Caco-2 (cell line): ENCODE measurements at regions of chr13 and their contacts with region 1.

Region 1: DNA sequence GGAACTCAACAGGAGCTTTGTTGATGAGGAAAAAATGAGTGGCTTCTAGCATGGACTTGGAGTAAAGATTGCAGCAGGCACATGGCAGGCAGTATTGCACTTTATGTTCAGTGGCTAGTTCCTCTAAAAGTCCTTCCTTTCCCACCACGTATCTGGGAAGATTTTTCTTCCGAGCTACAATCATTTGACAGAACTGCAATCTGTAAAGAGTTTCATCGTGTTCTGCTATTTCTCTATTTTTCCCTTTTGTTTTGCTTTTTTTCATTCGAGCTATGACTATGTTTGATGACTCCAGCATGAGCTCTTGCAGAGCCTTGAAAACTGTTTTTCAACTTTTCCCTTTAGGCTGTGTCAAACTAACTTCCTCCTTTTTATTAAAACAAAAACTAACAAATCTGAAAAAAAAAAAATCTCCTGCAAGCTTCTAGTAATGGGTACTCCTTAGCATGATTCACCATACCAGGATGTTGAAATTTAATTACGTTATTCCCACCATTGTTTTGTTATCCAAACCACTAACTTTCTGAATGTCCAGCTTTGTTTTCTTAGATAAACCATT is 12.3 kb downstream of the CLDN10 start:
- DNase-seq: no peak
- H3K4me3 ChIP-seq: no peak overlapping the region
- H3K4me3 Mint-ChIP-seq: no peak overlapping the region
- H3K27ac Mint-ChIP-seq: no peak overlapping the region
- H3K4me1 ChIP-seq: no peaks in the 10 kb centered on the region
- H3K4me1 Mint-ChIP-seq: no peaks in the 10 kb centered on the region
- H3K27me3 ChIP-seq: no peaks in the 10 kb centered on the region
- H3K27me3 Mint-ChIP-seq: peaks cover 10% of the 10 kb centered on the region
- CTCF ChIP-seq: no peak

Region 2: DNA sequence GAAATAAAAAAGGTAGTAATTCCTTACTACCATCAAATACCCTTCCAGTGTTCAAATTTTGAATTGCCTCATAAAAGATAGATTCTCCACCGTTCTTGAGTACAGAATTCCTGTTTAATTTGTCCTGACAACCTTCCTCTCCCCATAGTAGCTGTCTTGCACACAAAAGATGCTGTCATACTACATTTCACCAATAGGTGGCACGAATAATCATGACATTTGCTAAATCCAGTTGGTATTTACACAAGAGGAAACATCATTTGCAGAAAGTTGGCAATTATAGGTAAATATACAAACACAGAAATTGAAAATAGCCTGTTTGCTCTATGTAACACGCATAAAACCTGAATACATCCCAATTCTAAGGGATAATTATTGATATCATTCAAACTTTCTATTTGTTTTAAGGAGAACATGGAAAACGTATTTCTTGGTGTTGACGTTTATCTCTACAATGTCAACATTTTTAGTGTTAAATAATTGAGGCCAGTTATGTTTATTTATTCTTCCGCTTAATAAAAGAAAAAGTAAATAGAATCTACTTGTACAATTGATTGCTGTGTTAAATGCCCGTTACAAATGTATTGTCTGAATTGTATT is 70.6 kb before region 1 on chr13:
- CTCF ChIA-PET with region 1: interaction called, 3 read pairs
- POLR2A ChIA-PET with region 1: no interaction called
- intact Hi-C with region 1: loop called (anchors 2 kb)
- DNase-seq: peak in 1 of 2 experiments; percentile 66
- H3K4me3 ChIP-seq: no peak overlapping the region
- H3K4me3 Mint-ChIP-seq: no peak overlapping the region
- H3K27ac Mint-ChIP-seq: no peak overlapping the region
- H3K4me1 ChIP-seq: peaks cover 9% of the 10 kb centered on the region
- H3K4me1 Mint-ChIP-seq: peaks cover 8% of the 10 kb centered on the region
- H3K27me3 ChIP-seq: no peaks in the 10 kb centered on the region
- H3K27me3 Mint-ChIP-seq: no peaks in the 10 kb centered on the region
- CTCF ChIP-seq: peak; percentile 48 to 73

Region 3: DNA sequence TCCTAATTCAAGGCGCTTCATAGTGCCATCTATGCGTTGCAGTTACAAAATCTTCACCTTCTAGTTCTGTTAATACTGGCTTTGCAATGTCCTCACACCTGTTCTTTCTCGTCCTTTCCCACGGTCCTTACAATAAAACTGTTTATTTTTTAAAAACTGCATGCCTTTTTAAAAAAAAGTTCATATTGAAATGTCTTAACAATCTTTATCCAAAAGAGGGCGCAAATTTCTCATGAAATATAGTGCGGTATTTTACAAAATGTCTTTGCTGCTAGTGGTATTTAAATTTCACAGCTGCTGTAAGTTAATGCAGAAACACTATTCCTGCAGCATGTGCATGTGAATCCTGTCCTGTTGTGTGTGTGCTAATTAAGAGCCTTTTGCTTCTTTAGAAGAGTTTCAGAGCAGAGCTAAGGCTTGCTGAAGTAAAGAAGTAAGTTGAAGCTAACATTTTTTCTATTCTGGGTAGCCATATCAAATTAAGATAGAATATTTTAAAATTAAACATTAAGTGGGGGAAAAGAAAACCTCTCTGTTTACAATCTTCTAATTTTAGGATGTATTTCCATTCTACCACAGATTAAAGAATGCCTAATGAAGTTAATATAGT is 28.1 kb before region 1 on chr13:
- CTCF ChIA-PET with region 1: interaction called, 3 read pairs
- POLR2A ChIA-PET with region 1: no interaction called
- intact Hi-C with region 1: loop called (anchors 2 kb)
- DNase-seq: no peak
- H3K4me3 ChIP-seq: no peak overlapping the region
- H3K4me3 Mint-ChIP-seq: no peak overlapping the region
- H3K27ac Mint-ChIP-seq: no peak overlapping the region
- H3K4me1 ChIP-seq: no peaks in the 10 kb centered on the region
- H3K4me1 Mint-ChIP-seq: peaks cover 25% of the 10 kb centered on the region
- H3K27me3 ChIP-seq: no peaks in the 10 kb centered on the region
- H3K27me3 Mint-ChIP-seq: peaks cover 3% of the 10 kb centered on the region
- CTCF ChIP-seq: peak; percentile 32 to 55

Region 4: DNA sequence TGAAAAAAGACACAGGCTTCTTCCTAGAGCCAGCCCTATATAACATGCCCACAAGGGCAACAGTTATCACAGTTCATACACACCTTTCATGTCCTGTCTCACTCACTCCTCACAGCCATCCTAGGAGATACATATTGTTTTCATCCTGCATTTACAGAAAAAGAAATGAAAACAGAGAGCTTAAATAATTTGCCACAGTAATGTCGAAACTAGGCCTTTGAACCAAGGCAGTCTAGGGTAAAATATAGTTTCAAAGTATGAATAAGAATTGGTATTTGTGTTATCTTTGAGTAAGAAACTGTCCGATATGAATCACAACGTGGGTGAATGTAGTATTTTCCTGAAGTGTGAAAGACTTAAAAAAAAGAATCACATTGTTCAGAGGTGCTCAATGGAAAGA is 14.5 kb after region 1 on chr13:
- CTCF ChIA-PET with region 1: no interaction called
- POLR2A ChIA-PET with region 1: no interaction called
- intact Hi-C with region 1: no loop called
- DNase-seq: no peak
- H3K4me3 ChIP-seq: no peak overlapping the region
- H3K4me3 Mint-ChIP-seq: no peak overlapping the region
- H3K27ac Mint-ChIP-seq: no peak overlapping the region
- H3K4me1 ChIP-seq: no peaks in the 10 kb centered on the region
- H3K4me1 Mint-ChIP-seq: no peaks in the 10 kb centered on the region
- H3K27me3 ChIP-seq: no peaks in the 10 kb centered on the region
- H3K27me3 Mint-ChIP-seq: no peaks in the 10 kb centered on the region
- CTCF ChIP-seq: no peak